ENCODE measurements at regions of chr2 and their contacts with region 1.

Region 1: GRCh38 chr2:169479257-169480078 is at the start of gene BBS5:
- DNase-seq: peak; percentile 61 to 76 (median 70)
- H3K4me3 ChIP-seq: peak within 1 kb of the TSS; percentile 75 to 85
- H3K4me3 Mint-ChIP-seq: peak within 1 kb of the TSS; percentile 92 to 95 (median 94)
- H3K27ac ChIP-seq: peak within 1 kb of the TSS; percentile 29
- H3K27ac Mint-ChIP-seq: peak within 1 kb of the TSS in 6 of 7 donors; percentile 54 to 92 (median 81)
- H3K4me1 ChIP-seq: peaks cover 13% of the 10 kb centered on the region
- H3K4me1 Mint-ChIP-seq: peaks cover 6 to 21% (median 16%) of the 10 kb centered on the region in 4 donors
- H3K27me3 ChIP-seq: no peaks in the 10 kb centered on the region
- H3K27me3 Mint-ChIP-seq: no peaks in the 10 kb centered on the region
- total RNA-seq, gene BBS5: 1.7 to 1.8 TPM

Region 2: DNA sequence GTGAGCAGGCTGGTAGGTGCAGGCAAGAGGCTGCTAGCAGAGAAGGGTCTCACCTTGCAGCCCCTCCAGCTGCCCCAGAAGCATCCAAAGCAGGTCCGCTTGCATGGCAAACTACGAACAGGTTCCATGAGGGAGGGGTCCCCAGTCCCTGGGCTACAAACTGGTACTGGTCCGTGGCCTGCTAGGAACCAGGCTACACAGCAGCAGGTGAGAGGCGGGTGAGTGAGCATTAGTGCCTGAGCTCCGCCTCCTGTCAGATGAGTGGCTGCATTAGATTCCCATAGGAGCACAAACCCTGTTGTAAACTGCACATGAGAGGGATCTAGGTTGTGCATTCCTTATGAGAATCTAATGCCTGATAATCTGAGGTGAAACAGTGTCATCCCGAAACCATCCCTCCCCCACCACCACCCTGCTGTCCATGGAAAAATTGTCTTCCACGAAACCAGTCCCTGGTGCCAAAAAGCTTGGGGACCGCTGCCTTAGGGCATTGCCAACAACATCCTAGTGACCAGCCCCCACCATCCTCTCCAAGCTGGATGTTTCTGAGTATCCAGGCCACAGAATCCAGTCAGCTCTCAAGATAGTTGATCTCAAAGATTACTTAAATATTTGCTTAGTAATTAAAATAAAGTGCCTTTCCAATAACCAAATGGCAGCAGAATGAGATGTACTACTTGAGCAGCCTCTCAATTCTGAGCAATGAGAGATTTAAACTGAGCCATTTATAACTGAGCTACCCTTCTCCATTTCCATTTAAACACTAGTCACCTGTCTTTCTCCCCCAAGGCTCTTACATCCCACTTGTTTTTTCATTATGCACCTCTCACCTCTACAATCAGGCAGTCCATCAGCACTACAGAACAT is 149.5 kb before region 1 on chr2:
- CTCF ChIA-PET with region 1: no interaction called
- POLR2A ChIA-PET with region 1: no interaction called
- intact Hi-C with region 1: no loop called
- DNase-seq: no peak
- H3K4me3 ChIP-seq: no peak overlapping the region
- H3K4me3 Mint-ChIP-seq: no peak overlapping the region
- H3K27ac ChIP-seq: no peak overlapping the region
- H3K27ac Mint-ChIP-seq: no peak overlapping the region
- H3K4me1 ChIP-seq: no peaks in the 10 kb centered on the region
- H3K4me1 Mint-ChIP-seq: no peaks in the 10 kb centered on the region
- H3K27me3 ChIP-seq: no peaks in the 10 kb centered on the region
- H3K27me3 Mint-ChIP-seq: peaks cover 7 to 8% of the 10 kb centered on the region in 2 donors

Region 3: DNA sequence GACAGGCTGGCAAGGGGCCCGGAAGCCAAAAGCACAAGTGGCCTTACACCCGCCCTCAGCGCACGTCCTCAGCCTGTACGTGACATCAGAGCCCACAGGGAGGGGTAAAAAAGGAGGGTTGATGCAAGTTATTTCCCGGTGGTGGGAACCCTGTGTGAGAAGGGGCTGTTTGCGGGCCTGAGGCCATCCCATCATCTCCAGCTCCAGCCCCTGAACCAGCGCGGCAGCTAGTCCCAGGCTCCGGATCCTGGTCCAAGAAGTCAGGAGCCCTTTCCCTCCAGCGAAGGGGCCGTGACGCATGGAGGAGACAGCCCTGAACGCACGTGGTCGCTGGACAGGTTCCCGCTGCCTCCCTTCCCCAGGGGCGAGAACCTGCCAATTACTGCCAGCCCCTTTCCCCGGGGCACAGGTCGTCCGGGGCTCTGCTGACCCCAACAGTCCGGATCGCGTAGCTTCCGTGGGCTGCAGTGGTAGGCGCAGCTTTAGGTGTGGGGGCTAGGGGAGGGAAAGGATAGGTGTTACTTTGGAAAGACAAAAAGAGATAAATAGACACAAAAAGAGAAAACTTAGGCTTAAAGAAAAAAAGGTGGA is 115.8 kb before region 1 on chr2:
- CTCF ChIA-PET with region 1: no interaction called
- POLR2A ChIA-PET with region 1: no interaction called
- intact Hi-C with region 1: loop called (anchors 10 kb)
- DNase-seq: peak in 3 of 5 donors; percentile 44 to 75 (median 51)
- H3K4me3 ChIP-seq: peak overlapping the region; percentile 78 to 92
- H3K4me3 Mint-ChIP-seq: peak overlapping the region; percentile 89 to 97 (median 95)
- H3K27ac ChIP-seq: no peak overlapping the region
- H3K27ac Mint-ChIP-seq: peak overlapping the region in 6 of 7 donors; percentile 32 to 89 (median 64)
- H3K4me1 ChIP-seq: peaks cover 16% of the 10 kb centered on the region
- H3K4me1 Mint-ChIP-seq: peaks cover 16 to 41% (median 21%) of the 10 kb centered on the region in 4 donors
- H3K27me3 ChIP-seq: peaks cover 6% of the 10 kb centered on the region
- H3K27me3 Mint-ChIP-seq: peaks cover 22 to 23% of the 10 kb centered on the region in 2 donors

Region 4: DNA sequence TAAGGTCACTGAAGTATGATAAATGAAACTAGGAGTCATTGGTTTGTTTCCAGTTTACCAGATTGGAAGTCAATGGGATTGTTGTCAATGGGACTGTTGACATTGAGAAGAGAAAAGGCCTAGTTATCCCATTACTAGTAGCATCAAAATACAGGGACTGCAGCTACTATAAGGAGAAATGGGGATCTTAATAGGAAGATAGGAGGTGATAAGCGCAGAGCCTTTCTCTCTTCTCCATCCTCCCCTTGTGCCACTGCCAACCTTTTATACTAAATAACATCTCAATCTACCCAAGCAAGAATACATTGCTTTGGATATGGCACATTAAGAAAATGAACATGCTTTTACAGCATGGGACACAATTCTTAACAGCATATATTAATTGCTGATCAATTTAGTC is 10.6 kb before region 1 on chr2:
- CTCF ChIA-PET with region 1: interaction called, 19 read pairs
- POLR2A ChIA-PET with region 1: interaction called, 7 read pairs
- intact Hi-C with region 1: no loop called
- DNase-seq: no peak
- H3K4me3 ChIP-seq: no peak overlapping the region
- H3K4me3 Mint-ChIP-seq: no peak overlapping the region
- H3K27ac ChIP-seq: no peak overlapping the region
- H3K27ac Mint-ChIP-seq: peak overlapping the region in 1 of 7 donors; percentile 7
- H3K4me1 ChIP-seq: no peaks in the 10 kb centered on the region
- H3K4me1 Mint-ChIP-seq: peaks cover 0 to 2% (median under 1%) of the 10 kb centered on the region in 4 donors
- H3K27me3 ChIP-seq: no peaks in the 10 kb centered on the region
- H3K27me3 Mint-ChIP-seq: no peaks in the 10 kb centered on the region

Region 5: DNA sequence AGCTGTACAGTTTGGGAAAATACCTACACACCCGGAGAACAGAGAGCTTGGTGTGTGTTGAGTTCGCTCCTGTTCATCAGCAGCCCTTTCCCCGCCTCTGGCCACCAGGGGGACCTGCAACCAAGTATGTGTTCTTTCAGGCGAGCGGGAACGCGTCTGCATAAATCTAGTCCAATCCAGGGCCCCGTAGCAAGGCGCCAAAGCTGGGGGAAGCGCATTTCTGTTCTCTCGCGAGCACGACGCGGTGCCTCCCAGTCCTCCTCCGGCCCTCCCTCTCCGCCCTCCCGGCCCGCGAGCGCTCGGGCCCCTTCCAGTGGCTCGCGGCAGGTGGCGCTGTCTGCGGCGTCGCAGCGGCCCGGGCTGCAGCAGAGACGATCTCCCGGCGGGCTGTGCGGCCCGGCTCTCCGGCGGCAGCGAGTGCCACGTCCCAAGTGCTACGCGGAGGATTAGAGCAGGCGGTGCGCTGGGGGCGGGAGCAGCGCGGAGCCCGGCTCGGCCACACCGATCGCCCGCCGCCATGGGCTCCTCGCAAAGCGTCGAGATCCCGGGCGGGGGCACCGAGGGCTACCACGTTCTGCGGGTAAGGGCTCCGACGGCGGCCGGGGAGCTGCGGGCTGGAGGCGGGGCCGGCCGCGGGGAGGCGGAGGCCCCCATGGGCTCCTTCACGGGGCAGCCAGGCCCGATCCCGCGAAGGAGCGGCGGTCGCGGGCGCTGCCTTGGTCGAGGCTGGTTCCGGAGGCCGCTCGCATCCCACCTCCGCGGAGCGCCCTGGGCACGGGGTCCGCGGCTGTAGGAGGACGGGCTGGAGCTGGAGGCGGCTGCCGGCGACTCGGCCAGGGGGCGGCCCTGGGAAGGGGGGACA is 1449.6 kb after region 1 on chr2 and contains the start of gene GORASP2:
- CTCF ChIA-PET with region 1: no interaction called
- POLR2A ChIA-PET with region 1: no interaction called
- intact Hi-C with region 1: no loop called
- DNase-seq: peak; percentile 98 to 99 (median 99)
- H3K4me3 ChIP-seq: peak within 1 kb of the TSS; percentile 70 to 82
- H3K4me3 Mint-ChIP-seq: peak within 1 kb of the TSS; percentile 93 to 99 (median 96)
- H3K27ac ChIP-seq: peak within 1 kb of the TSS; percentile 89
- H3K27ac Mint-ChIP-seq: peak within 1 kb of the TSS; percentile 94 to 98 (median 97)
- H3K4me1 ChIP-seq: peaks cover 43% of the 10 kb centered on the region
- H3K4me1 Mint-ChIP-seq: peaks cover 24 to 48% (median 38%) of the 10 kb centered on the region in 4 donors
- H3K27me3 ChIP-seq: no peaks in the 10 kb centered on the region
- H3K27me3 Mint-ChIP-seq: no peaks in the 10 kb centered on the region
- total RNA-seq, gene GORASP2: 82.4 to 83.2 TPM